ENCODE measurements at regions of chr12 and their contacts with region 1.

Region 1: DNA sequence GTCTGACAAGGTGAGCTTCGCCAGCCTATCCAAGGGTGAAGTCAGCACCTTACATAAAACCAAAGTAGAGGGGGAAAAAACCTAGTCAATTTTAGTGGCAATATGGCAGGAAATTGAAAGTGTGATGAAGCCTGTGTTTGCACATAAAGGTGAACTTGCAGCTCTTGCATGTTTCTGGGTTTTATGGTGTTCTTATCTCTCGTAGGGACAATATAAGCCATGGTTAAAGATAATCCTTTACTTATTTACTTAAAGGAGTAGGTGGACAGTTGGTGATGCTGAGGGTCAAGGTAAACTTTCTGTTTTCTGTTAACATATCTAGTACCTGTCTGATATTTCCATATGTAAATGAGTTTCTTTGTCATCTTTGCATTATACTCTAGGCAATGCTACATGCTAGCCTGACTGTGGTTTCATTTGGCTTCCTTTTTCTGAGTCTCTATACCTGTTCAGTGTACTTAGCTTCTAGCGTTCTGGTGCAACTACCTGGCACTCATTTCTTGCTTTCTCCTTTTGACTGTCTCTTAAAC is 32.8 kb downstream of the CCDC91 start:
- DNase-seq: no peak
- ATAC-seq: no peak
- H3K4me3 ChIP-seq: no peak overlapping the region
- H3K27ac ChIP-seq: no peak overlapping the region
- H3K4me1 ChIP-seq: no peaks in the 10 kb centered on the region
- H3K27me3 ChIP-seq: no peaks in the 10 kb centered on the region
- CTCF ChIP-seq: no peak
- EP300 ChIP-seq: no peak
- POLR2A ChIP-seq: no peak
- RAD21 ChIP-seq: no peak

Region 2: DNA sequence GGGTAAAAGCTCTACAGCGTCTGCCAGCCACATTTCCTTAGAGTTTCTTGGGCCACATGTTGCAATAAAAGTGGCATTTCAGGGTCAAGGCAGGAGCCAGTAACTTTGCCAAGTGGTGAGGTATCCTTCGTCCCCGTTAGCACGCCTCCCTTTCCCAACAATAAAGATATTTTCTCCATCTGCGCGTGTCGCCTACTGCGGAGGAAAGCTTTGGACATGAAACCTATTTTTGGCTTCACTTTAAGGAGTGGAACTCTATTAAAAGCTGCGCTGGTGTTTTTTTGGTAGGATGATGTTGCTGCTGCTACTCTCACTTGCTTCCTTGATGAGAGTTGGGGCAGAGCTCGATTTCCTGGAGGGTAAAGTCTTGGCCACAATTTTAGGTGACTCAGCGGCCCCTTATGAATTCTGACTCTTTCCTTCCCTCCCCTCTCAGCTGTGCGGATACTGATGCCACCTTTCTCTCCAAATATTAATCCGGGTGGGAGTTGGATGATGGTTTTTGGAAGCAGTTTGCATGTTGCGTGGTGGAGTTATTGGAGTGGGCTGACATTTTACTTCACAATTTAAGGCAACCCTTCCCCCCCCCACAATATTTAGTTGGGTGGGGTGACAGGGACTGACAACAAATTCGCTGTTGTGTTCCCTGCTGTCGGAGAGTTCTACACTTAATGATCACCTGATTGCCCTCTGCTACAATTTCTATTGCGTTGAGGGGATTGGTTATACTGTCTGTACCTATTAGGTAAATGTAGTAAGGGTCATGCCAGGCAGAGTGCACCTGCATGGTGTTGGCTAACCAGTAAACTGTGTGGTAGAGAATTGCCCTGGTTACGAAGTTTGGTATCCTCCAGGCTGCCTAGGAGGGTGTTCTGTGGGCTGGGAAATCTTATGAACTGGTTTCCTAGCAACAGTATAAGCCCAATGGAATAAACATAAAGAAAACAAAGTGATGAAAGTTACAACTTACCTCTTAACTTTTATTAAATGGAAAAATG is 31.7 kb before region 1 on chr12:
- CTCF ChIA-PET with region 1: no interaction called
- POLR2A ChIA-PET with region 1: no interaction called
- in situ Hi-C with region 1: no loop called
- intact Hi-C with region 1: loop called (anchors 1 kb)
- DNase-seq: no peak
- ATAC-seq: peak; percentile 25
- H3K4me3 ChIP-seq: peak overlapping the region; percentile 78 to 93 (median 83)
- H3K27ac ChIP-seq: peak overlapping the region; percentile 84
- H3K4me1 ChIP-seq: peaks cover 26% of the 10 kb centered on the region
- H3K27me3 ChIP-seq: no peaks in the 10 kb centered on the region; a peak in 1 of 5 replicates
- CTCF ChIP-seq: no peak
- EP300 ChIP-seq: no peak
- POLR2A ChIP-seq: no peak
- RAD21 ChIP-seq: no peak

Region 3: GRCh38 chr12:28278499-28278898 is 55.4 kb after region 1 on chr12:
- CTCF ChIA-PET with region 1: no interaction called
- POLR2A ChIA-PET with region 1: no interaction called
- in situ Hi-C with region 1: no loop called
- intact Hi-C with region 1: no loop called
- DNase-seq: no peak
- ATAC-seq: no peak
- H3K4me3 ChIP-seq: no peak overlapping the region
- H3K27ac ChIP-seq: no peak overlapping the region
- H3K4me1 ChIP-seq: no peaks in the 10 kb centered on the region
- H3K27me3 ChIP-seq: no peaks in the 10 kb centered on the region
- CTCF ChIP-seq: no peak
- EP300 ChIP-seq: no peak
- POLR2A ChIP-seq: no peak
- RAD21 ChIP-seq: no peak

Measured in HepG2 (cell line).